ENCODE measurements at regions of chr12 and their contacts with region 1.

Region 1: GRCh38 chr12:53984901-53985709 is at the start of gene HOXC10:
- DNase-seq: peak; percentile 93
- ATAC-seq: peak; percentile 87
- H3K4me3 ChIP-seq: peak within 1 kb of the TSS in 1 of 2 experiments; percentile 30; a peak in 2 of 4 replicates
- H3K27ac ChIP-seq: no peak within 1 kb of the TSS
- H3K4me1 ChIP-seq: peaks cover 4 to 17% of the 10 kb centered on the region in 2 experiments
- H3K27me3 ChIP-seq: no peaks in the 10 kb centered on the region
- CTCF ChIP-seq: peak; percentile 76 to 86 (median 82)
- POLR2A ChIP-seq: no peak
- RAD21 ChIP-seq: peak; percentile 87
- total RNA-seq, gene HOXC10: 3.8 TPM

Region 2: GRCh38 chr12:53766881-53767280 is 218.2 kb before region 1 on chr12:
- CTCF ChIA-PET with region 1: interaction called, 5 read pairs
- POLR2A ChIA-PET with region 1: no interaction called
- RAD21 ChIA-PET with region 1: no interaction called
- intact Hi-C with region 1: loop called (anchors 5 kb)
- DNase-seq: no peak
- ATAC-seq: no peak
- H3K4me3 ChIP-seq: no peak overlapping the region
- H3K27ac ChIP-seq: no peak overlapping the region
- H3K4me1 ChIP-seq: peaks cover 9 to 15% of the 10 kb centered on the region in 2 experiments
- H3K27me3 ChIP-seq: peaks cover 4% of the 10 kb centered on the region; the same call in 1 of the 2 replicates
- CTCF ChIP-seq: no peak
- POLR2A ChIP-seq: no peak
- RAD21 ChIP-seq: no peak

Region 3: DNA sequence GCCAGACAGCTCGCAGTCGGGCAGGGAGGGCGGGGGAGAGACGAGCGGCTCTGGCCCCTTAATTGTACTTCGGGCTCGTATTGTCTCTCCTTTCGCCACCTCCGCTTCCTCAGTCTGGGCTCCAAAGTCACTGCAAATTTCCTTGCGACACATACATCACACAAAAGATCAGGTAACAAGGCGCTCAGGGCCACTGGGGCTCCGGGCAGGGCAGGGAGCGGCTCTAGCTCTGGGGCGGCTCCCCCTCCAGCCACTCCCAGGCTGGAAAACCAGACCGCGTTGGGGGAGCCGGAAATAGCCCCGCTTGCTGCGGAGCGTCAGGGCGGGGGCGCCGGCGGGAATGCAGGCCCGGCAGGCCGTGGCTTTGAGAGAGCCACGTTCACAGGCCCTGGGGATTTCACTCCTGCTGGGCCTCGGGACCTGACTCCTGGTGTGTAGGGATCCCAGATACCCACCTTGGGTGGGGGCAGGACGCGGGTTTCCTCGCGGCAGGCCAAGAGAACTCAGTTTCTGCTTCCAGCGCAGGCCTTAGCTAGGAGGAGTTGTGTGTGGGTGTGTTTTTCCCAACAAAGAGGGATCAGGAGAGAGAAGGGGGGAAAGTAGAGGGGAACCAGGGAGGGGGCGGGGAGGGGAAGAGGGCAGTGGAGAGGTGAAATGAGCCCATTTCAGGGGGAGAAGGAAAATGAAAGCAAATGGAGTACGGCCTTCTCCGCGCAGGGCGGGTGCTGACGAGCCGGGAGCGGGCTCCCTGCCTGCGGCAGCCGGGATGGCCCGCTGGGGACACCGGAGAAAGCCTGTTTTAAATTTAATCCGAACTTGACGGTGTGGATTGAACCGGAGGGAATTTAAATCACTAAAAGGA is 10.5 kb after region 1 on chr12:
- CTCF ChIA-PET with region 1: interaction called, 15 read pairs
- POLR2A ChIA-PET with region 1: interaction called, 3 read pairs
- RAD21 ChIA-PET with region 1: no interaction called
- intact Hi-C with region 1: no loop called
- DNase-seq: no peak
- ATAC-seq: peak; percentile 78
- H3K4me3 ChIP-seq: peak overlapping the region; percentile 78 to 85
- H3K27ac ChIP-seq: peak overlapping the region; percentile 81
- H3K4me1 ChIP-seq: peaks cover 17 to 35% of the 10 kb centered on the region in 2 experiments; a peak in 3 of 4 replicates
- H3K27me3 ChIP-seq: no peaks in the 10 kb centered on the region
- CTCF ChIP-seq: no peak
- POLR2A ChIP-seq: peak; percentile 61
- RAD21 ChIP-seq: no peak

Region 4: DNA sequence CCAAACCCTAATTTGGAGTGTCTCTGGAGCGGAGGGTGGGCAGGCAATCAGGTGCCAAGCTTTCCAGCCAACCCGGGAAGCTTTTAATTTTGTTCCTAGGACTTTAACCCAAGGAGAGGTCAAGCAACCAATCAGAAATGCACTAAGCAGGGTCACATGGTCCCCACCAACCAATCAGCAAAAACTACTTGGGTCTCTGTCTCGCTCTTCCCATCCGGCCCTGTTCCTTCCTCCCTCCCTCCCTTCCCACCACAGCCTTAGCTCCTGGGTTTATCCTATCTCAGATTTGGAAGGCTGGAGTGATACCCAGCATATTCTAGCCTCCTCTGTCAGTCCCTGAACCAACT is 55.0 kb after region 1 on chr12:
- CTCF ChIA-PET with region 1: no interaction called
- POLR2A ChIA-PET with region 1: no interaction called
- RAD21 ChIA-PET with region 1: no interaction called
- intact Hi-C with region 1: no loop called
- DNase-seq: no peak
- ATAC-seq: peak; percentile 74
- H3K4me3 ChIP-seq: no peak overlapping the region
- H3K27ac ChIP-seq: no peak overlapping the region
- H3K4me1 ChIP-seq: peaks cover 0 to 12% of the 10 kb centered on the region in 2 experiments; a peak in 3 of 4 replicates
- H3K27me3 ChIP-seq: no peaks in the 10 kb centered on the region
- CTCF ChIP-seq: no peak
- POLR2A ChIP-seq: no peak
- RAD21 ChIP-seq: no peak

Region 5: GRCh38 chr12:54191550-54192022 is 206.5 kb after region 1 on chr12:
- CTCF ChIA-PET with region 1: interaction called, 11 read pairs
- POLR2A ChIA-PET with region 1: no interaction called
- RAD21 ChIA-PET with region 1: interaction called in 1 of 2 experiments, 6 read pairs
- intact Hi-C with region 1: no loop called
- DNase-seq: peak; percentile 77
- ATAC-seq: peak; percentile 71
- H3K4me3 ChIP-seq: no peak overlapping the region
- H3K27ac ChIP-seq: no peak overlapping the region
- H3K4me1 ChIP-seq: peaks cover 5 to 33% of the 10 kb centered on the region in 2 experiments
- H3K27me3 ChIP-seq: no peaks in the 10 kb centered on the region
- CTCF ChIP-seq: peak; percentile 80 to 92 (median 90)
- POLR2A ChIP-seq: no peak
- RAD21 ChIP-seq: peak; percentile 89

Region 6: GRCh38 chr12:54214553-54215406 is 229.7 kb after region 1 on chr12:
- CTCF ChIA-PET with region 1: interaction called, 11 read pairs
- POLR2A ChIA-PET with region 1: no interaction called
- RAD21 ChIA-PET with region 1: no interaction called
- intact Hi-C with region 1: loop called (anchors 2 kb)
- DNase-seq: peak; percentile 85
- ATAC-seq: peak; percentile 93
- H3K4me3 ChIP-seq: peak overlapping the region; percentile 15 to 30; a peak in 3 of 4 replicates
- H3K27ac ChIP-seq: no peak overlapping the region
- H3K4me1 ChIP-seq: peaks cover 3 to 26% of the 10 kb centered on the region in 2 experiments
- H3K27me3 ChIP-seq: no peaks in the 10 kb centered on the region
- CTCF ChIP-seq: peak; percentile 98 to 100 (median 99)
- POLR2A ChIP-seq: no peak
- RAD21 ChIP-seq: peak; percentile 70